Cardiac septum (tissue), 1 donor: ENCODE measurements at regions of chr6 and their contacts with region 1.

Region 1: DNA sequence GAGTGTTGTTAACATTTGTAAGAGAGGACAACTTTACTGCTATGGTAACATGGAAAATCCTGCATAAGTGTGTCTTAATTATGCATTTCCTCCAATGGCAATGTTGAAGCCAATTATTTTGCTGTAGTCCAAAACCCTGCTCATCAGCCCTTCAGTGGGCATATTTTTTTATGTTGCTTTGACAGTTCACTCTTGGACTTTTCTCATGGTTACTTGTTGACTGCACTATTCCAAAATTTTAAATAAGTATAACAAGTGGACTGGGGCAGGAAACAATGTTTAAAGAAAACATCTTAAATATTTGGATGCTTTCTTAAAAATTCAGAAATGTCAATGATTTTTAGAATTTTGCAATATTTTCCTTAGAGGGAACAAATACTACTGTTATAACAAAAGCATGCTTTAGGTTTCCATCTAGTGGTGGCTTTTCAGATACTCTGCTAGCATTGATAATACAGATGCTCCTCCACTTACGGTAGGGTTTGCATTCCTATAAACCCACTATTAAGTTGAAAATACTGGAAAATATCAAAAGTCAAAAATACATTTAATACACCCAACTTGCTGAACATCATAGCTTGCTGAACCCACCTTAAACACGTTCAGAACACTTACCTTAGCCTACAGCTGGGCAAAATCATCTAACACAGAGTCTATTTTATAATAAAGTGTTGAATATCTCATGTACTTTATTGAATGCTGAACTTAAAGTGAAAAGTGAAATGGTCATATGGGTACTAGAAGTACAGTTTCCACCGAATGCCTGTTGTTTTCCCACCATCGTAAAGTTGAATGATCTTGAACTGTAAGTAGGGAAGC is 86.4 kb downstream of the ADGRG6 start:
- DNase-seq: no peak

Region 2: GRCh38 chr6:142146828-142147662 is 241.2 kb before region 1 on chr6 and contains the starts of genes NMBR and VTA1:
- intact Hi-C with region 1: loop called (anchors 5 kb)
- DNase-seq: peak; percentile 99
- total RNA-seq, gene NMBR: not detected
- total RNA-seq, gene VTA1: 34.1 TPM

Region 3: GRCh38 chr6:142222022-142222421 is 166.2 kb before region 1 on chr6:
- intact Hi-C with region 1: loop called (anchors 10 kb)
- DNase-seq: no peak

Region 4: GRCh38 chr6:142349187-142349823 is 38.9 kb before region 1 on chr6:
- intact Hi-C with region 1: no loop called
- DNase-seq: no peak

Region 5: DNA sequence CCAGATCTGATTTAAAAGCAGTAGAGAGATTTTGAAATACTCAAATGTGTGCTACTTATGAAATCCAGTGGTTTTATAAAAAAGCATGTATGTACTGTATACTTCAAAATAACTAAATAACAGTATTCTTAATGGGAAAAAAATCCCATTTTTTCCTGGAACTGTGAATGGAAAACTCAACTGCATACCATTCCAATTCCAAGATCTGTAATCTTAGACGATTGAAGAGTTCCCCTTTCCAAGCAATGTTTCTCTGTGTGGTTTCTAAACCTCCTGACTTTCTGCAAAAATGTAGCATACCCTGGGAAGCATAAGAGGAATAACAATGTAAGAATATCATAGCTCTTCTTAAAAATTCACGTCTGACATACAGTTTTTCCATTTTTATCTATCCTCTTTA is 597.1 kb after region 1 on chr6:
- intact Hi-C with region 1: no loop called
- DNase-seq: no peak